Calu3 (cell line): ENCODE measurements at regions of chr21 and their contacts with region 1.

Region 1: GRCh38 chr21:38997051-38997842 is 186.0 kb downstream of the PSMG1 start:
- DNase-seq: no peak
- H3K4me3 Mint-ChIP-seq: no peak overlapping the region
- H3K27ac Mint-ChIP-seq: no peak overlapping the region
- H3K4me1 Mint-ChIP-seq: peaks cover 17% of the 10 kb centered on the region
- H3K27me3 Mint-ChIP-seq: no peaks in the 10 kb centered on the region
- CTCF ChIP-seq: no peak

Region 2: GRCh38 chr21:38965909-38966504 is 31.2 kb before region 1 on chr21:
- CTCF ChIA-PET with region 1: interaction called, 3 read pairs
- intact Hi-C with region 1: loop called (anchors 1 kb)
- DNase-seq: peak; percentile 79
- H3K4me3 Mint-ChIP-seq: peak overlapping the region; percentile 30
- H3K27ac Mint-ChIP-seq: peak overlapping the region; percentile 70
- H3K4me1 Mint-ChIP-seq: no peaks in the 10 kb centered on the region
- H3K27me3 Mint-ChIP-seq: no peaks in the 10 kb centered on the region
- CTCF ChIP-seq: no peak